ENCODE measurements at regions of chr3 and their contacts with region 1.

Region 1: DNA sequence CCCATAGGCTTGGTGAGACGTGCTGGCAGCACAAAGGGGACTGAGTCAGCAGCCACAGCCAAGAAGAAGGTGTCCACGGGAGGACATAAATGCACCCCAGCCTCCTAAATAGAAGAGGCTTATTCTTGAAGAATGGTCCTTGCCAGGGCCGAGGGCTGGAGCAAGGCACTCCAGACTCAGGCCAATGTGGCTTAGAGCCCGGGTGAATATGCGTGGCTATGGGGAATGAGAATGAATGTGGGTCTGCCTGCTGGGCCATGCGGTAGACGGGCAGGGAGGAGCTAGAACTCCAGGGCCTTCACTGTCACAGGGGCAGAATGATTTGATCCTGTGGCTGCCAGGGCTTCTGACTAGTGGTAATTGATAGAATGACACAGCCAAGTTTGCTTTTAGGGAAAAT is 34.0 kb downstream of the DHX30 start:
- DNase-seq: no peak
- H3K4me3 Mint-ChIP-seq: no peak overlapping the region
- H3K27ac Mint-ChIP-seq: no peak overlapping the region
- H3K4me1 Mint-ChIP-seq: peaks cover 5% of the 10 kb centered on the region
- H3K27me3 Mint-ChIP-seq: no peaks in the 10 kb centered on the region

Region 2: DNA sequence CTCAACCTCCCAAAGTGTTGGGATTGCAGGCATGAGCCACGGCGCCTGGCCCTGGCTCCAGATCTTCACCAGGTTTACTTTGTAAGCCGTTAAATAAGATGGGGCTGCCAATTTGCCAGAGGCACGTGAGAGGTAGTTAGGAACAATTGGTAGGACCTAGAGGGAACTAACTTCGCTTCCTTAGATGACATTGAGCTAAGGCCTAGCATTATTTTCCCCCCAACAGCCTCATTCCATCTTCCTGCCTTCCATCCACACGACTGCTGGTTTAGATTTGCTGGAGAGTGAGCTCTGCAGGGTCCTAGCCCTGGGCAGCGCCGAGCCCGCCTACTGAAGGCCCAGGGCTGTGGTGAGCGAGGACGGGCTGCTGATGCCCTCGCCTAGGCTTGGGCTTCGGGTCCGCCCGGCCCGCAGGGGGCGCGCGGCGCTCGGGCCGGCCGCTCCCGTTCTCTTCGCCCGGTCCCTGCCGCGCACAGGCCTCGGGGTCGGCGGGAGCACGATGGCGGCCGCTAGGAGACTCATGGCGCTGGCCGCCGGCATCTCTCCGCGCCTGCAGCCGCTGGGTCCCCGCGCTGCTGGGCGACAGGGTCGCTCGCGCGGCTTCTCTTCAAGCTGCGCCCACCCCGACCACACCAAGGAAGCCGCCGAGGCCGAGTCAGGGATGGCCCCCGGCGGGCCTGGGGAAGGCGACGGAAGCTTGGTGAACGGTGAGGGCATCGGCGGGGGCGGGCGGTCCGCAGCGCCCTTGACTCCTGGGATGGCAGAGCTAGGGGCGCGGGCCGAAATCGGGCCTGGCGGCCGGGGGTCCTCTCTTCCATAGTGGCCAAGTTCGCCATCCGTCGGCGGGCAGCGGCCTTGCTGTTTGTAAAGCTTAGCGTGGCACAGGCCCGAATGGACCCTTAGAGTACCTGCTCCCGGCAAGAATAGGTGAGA is 12.2 kb before region 1 on chr3:
- intact Hi-C with region 1: no loop called
- DNase-seq: peak; percentile 77
- H3K4me3 Mint-ChIP-seq: peak overlapping the region; percentile 95
- H3K27ac Mint-ChIP-seq: peak overlapping the region; percentile 83
- H3K4me1 Mint-ChIP-seq: peaks cover 34% of the 10 kb centered on the region
- H3K27me3 Mint-ChIP-seq: no peaks in the 10 kb centered on the region

Region 3: GRCh38 chr3:47989981-47990440 is 153.0 kb after region 1 on chr3:
- intact Hi-C with region 1: loop called (anchors 1 kb)
- DNase-seq: peak; percentile 54
- H3K4me3 Mint-ChIP-seq: no peak overlapping the region
- H3K27ac Mint-ChIP-seq: no peak overlapping the region
- H3K4me1 Mint-ChIP-seq: peaks cover 11% of the 10 kb centered on the region
- H3K27me3 Mint-ChIP-seq: no peaks in the 10 kb centered on the region